Gastrocnemius medialis (tissue), 4 donors: ENCODE measurements at regions of chr12 and their contacts with region 1.

Region 1: GRCh38 chr12:64670856-64671624 is 60.7 kb downstream of the RASSF3 start:
- DNase-seq: no peak
- ATAC-seq: no peak
- H3K4me3 ChIP-seq: no peak overlapping the region
- H3K27ac ChIP-seq: peak overlapping the region in 2 of 4 donors; percentile 7 to 12
- H3K4me1 ChIP-seq: peaks cover 6 to 43% of the 10 kb centered on the region in 2 donors
- H3K27me3 ChIP-seq: no peaks in the 10 kb centered on the region
- CTCF ChIP-seq: no peak
- POLR2A ChIP-seq: no peak

Region 2: GRCh38 chr12:64627771-64628170 is 43.3 kb before region 1 on chr12:
- in situ Hi-C with region 1: no loop called
- intact Hi-C with region 1: loop called (anchors 1 kb)
- DNase-seq: no peak
- ATAC-seq: no peak
- H3K4me3 ChIP-seq: no peak overlapping the region
- H3K27ac ChIP-seq: peak overlapping the region in 1 of 4 donors; percentile 41
- H3K4me1 ChIP-seq: peaks cover 9 to 23% of the 10 kb centered on the region in 2 donors
- H3K27me3 ChIP-seq: no peaks in the 10 kb centered on the region
- CTCF ChIP-seq: no peak
- POLR2A ChIP-seq: no peak